ENCODE measurements at regions of chr10 and their contacts with region 1.

Region 1: GRCh38 chr10:119445311-119445934 is 97.1 kb downstream of the RGS10 start:
- DNase-seq: peak; percentile 89
- ATAC-seq: peak; percentile 89
- H3K4me3 Mint-ChIP-seq: no peak overlapping the region
- H3K27ac Mint-ChIP-seq: no peak overlapping the region
- H3K4me1 Mint-ChIP-seq: peaks cover 11% of the 10 kb centered on the region
- H3K27me3 Mint-ChIP-seq: no peaks in the 10 kb centered on the region
- CTCF ChIP-seq: peak; percentile 93

Region 2: GRCh38 chr10:119189811-119190282 is 255.6 kb before region 1 on chr10:
- CTCF ChIA-PET with region 1: interaction called, 13 read pairs
- POLR2A ChIA-PET with region 1: no interaction called
- intact Hi-C with region 1: no loop called
- DNase-seq: peak; percentile 35
- ATAC-seq: peak; percentile 40
- H3K4me3 Mint-ChIP-seq: no peak overlapping the region
- H3K27ac Mint-ChIP-seq: no peak overlapping the region
- H3K4me1 Mint-ChIP-seq: peaks cover 22% of the 10 kb centered on the region
- H3K27me3 Mint-ChIP-seq: no peaks in the 10 kb centered on the region
- CTCF ChIP-seq: no peak

Region 3: DNA sequence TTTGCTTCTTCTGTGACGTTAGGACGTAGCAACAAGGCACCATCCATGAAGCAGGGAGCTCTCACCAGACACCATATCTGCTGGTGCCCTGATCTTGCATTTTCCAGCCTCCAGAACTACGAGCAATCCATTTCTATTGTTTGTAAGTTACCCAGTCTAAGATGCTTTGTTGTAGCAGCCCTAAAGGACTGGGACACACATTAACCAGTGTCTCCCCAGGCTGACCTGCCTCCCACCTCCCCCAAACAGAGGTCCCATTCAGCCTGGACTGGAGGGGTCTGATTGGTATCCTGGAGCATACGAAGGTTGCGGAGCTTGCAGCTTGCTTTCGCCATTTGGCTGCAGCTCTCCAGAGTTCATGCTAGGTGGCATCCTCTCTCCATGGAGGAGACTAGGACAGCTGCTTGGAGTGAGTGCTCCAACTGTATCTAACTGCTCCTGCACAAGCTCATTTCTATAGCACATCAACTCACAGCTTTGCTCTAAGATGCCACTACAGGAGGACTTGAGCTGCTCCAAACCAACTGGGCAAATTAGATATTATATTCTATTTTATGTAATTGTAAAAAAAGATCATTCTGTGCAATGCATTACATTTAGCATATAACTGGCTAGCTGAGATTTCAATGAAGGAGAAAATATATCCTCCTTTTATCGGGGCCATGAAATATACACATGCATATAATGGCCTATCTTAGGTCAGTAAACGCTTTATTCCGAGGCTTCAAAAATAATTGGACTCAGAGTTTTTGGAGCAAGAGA is 246.0 kb before region 1 on chr10:
- CTCF ChIA-PET with region 1: interaction called, 61 read pairs
- POLR2A ChIA-PET with region 1: interaction called, 3 read pairs
- intact Hi-C with region 1: no loop called
- DNase-seq: peak; percentile 58
- ATAC-seq: peak; percentile 79
- H3K4me3 Mint-ChIP-seq: no peak overlapping the region
- H3K27ac Mint-ChIP-seq: no peak overlapping the region
- H3K4me1 Mint-ChIP-seq: peaks cover 13% of the 10 kb centered on the region
- H3K27me3 Mint-ChIP-seq: no peaks in the 10 kb centered on the region
- CTCF ChIP-seq: peak; percentile 48

Region 4: GRCh38 chr10:119348516-119349240 is 96.7 kb before region 1 on chr10:
- CTCF ChIA-PET with region 1: no interaction called
- POLR2A ChIA-PET with region 1: no interaction called
- intact Hi-C with region 1: no loop called
- DNase-seq: no peak
- ATAC-seq: no peak
- H3K4me3 Mint-ChIP-seq: no peak overlapping the region
- H3K27ac Mint-ChIP-seq: no peak overlapping the region
- H3K4me1 Mint-ChIP-seq: peaks cover 4% of the 10 kb centered on the region
- H3K27me3 Mint-ChIP-seq: no peaks in the 10 kb centered on the region
- CTCF ChIP-seq: no peak

Region 5: DNA sequence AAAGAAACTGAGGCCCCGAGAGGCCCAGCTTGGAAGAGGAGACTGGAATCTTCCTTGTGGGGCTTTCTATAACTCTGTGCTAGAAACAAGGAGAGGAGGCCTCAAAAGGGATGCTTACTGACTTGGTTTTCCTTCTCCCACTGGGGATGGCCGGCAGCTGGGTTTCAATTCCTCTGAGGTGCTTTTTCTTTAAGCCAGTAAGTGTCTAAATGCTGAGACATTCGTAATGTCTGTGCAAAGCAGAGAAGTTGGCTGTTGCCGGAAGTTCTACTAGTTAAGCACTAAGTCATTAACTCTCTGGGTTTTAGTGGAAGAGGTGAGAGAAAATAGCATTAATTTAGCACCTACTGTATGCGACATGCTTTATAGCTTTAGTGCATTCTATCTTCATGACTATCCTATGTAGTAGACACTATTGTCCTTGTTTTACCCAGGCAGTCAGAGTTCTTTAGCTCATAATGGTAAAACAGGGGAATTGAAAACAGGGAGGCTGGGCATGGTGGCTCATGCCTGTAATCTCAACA is 38.1 kb before region 1 on chr10:
- CTCF ChIA-PET with region 1: interaction called, 11 read pairs
- POLR2A ChIA-PET with region 1: no interaction called
- intact Hi-C with region 1: no loop called
- DNase-seq: no peak
- ATAC-seq: no peak
- H3K4me3 Mint-ChIP-seq: no peak overlapping the region
- H3K27ac Mint-ChIP-seq: no peak overlapping the region
- H3K4me1 Mint-ChIP-seq: no peaks in the 10 kb centered on the region
- H3K27me3 Mint-ChIP-seq: no peaks in the 10 kb centered on the region
- CTCF ChIP-seq: no peak

Region 6: DNA sequence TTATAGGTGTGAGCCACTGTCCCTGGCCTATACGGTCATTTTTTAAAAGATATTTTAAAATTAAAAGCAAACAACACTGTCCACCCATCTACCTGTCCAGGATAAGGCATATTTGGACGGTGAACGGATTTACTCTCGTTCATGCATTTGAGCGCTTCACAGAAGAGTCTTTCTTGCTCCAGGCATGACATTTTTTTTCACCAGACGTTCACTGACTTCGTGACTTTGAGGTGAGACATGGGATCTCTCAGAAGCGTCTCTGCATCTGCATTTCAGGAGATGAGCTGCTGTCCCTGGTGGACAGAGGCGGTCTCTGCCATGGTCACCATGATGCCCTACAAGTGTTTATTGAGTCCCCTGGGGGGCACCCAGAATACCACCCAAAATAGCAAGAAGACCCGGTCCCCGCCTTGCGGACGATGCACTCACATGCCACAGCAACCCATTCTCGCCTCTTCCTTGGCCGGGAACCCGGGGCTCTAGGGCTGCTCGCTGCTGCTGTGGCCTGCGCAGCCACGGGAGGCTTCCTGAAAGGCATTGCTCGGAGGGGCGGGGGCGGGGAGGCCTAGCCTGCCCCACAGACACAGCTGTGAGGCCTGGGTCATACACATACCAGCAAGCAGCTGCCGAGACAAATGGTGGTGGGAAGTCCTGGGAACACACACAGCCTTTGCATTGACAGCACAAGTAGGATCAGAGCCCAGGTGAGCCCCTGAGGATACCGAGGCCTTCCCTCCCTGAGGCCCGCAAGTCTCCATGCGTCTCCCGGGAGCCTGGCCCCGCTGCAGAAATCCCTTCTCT is 12.7 kb after region 1 on chr10:
- CTCF ChIA-PET with region 1: interaction called, 35 read pairs
- POLR2A ChIA-PET with region 1: no interaction called
- intact Hi-C with region 1: no loop called
- DNase-seq: no peak
- ATAC-seq: no peak
- H3K4me3 Mint-ChIP-seq: no peak overlapping the region
- H3K27ac Mint-ChIP-seq: no peak overlapping the region
- H3K4me1 Mint-ChIP-seq: peaks cover 3% of the 10 kb centered on the region
- H3K27me3 Mint-ChIP-seq: no peaks in the 10 kb centered on the region
- CTCF ChIP-seq: no peak

Region 7: DNA sequence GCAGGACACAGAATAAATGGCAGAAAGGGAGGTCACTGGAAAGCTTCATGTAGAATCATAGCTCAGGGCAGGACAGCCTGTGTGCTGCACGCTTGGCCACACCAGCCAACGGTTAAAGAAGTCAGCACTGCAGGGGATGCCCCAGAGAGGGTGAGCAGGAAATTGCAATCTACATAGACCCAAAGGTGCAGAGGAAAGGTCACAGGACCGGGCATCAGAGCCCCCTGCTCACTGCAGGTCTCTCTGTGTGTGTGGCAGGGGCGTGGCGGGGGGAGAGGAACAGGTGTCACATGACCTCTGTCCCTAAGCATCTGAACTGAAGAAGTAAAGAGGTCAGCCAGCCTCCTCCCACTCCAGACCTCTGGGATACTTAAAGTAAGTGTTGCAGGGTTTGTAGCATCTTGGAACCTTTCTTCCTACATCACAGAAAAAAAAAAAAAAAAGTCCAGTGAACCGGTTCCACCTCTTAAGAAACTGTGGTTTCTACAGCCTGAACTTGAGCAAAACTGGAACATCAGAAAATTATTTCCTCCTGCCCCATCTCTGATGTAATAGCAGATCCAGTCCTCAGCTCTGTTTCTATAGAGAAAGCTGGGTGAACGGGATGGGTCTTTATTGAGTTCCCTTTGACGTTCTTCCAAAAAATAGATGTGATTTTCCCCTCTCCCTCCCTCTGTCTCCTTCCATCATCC is 32.8 kb after region 1 on chr10:
- CTCF ChIA-PET with region 1: interaction called, 13 read pairs
- POLR2A ChIA-PET with region 1: no interaction called
- intact Hi-C with region 1: no loop called
- DNase-seq: peak; percentile 78
- ATAC-seq: peak; percentile 97
- H3K4me3 Mint-ChIP-seq: peak overlapping the region; percentile 26
- H3K27ac Mint-ChIP-seq: peak overlapping the region; percentile 41
- H3K4me1 Mint-ChIP-seq: peaks cover 28% of the 10 kb centered on the region
- H3K27me3 Mint-ChIP-seq: no peaks in the 10 kb centered on the region
- CTCF ChIP-seq: no peak

Region 8: GRCh38 chr10:119494236-119495060 is 49.0 kb after region 1 on chr10:
- CTCF ChIA-PET with region 1: interaction called, 19 read pairs
- POLR2A ChIA-PET with region 1: interaction called, 3 read pairs
- intact Hi-C with region 1: no loop called
- DNase-seq: no peak
- ATAC-seq: no peak
- H3K4me3 Mint-ChIP-seq: no peak overlapping the region
- H3K27ac Mint-ChIP-seq: peak overlapping the region; percentile 65
- H3K4me1 Mint-ChIP-seq: peaks cover 79% of the 10 kb centered on the region
- H3K27me3 Mint-ChIP-seq: no peaks in the 10 kb centered on the region
- CTCF ChIP-seq: no peak